ENCODE measurements at regions of chr5 and their contacts with region 1.

Region 1: GRCh38 chr5:42908509-42909488 is 97.1 kb upstream of the SELENOP start:
- DNase-seq: peak; percentile 87 to 89
- ATAC-seq: peak; percentile 91 to 97 (median 94)
- H3K4me3 ChIP-seq: peak overlapping the region; percentile 1 to 77 (median 56)
- H3K27ac ChIP-seq: peak overlapping the region in 1 of 10 donors; percentile 16
- H3K4me1 ChIP-seq: peaks cover 0 to 13% (median 4%) of the 10 kb centered on the region in 9 donors
- H3K27me3 ChIP-seq: peaks cover 0 to 20% (median 18%) of the 10 kb centered on the region in 7 donors
- CTCF ChIP-seq: peak; percentile 55 to 88 (median 84)

Region 2: GRCh38 chr5:42950440-42951292 is 41.9 kb after region 1 on chr5:
- intact Hi-C with region 1: loop called in 4 of 10 experiments (anchors 5 kb)
- DNase-seq: peak; percentile 29 to 81
- ATAC-seq: peak; percentile 82 to 92 (median 86)
- H3K4me3 ChIP-seq: peak overlapping the region; percentile 32 to 74 (median 60)
- H3K27ac ChIP-seq: peak overlapping the region; percentile 78 to 99 (median 94)
- H3K4me1 ChIP-seq: peaks cover 0 to 50% (median 25%) of the 10 kb centered on the region in 9 donors
- H3K27me3 ChIP-seq: peaks cover 12 to 99% (median 89%) of the 10 kb centered on the region in 7 donors
- CTCF ChIP-seq: no peak

Region 3: DNA sequence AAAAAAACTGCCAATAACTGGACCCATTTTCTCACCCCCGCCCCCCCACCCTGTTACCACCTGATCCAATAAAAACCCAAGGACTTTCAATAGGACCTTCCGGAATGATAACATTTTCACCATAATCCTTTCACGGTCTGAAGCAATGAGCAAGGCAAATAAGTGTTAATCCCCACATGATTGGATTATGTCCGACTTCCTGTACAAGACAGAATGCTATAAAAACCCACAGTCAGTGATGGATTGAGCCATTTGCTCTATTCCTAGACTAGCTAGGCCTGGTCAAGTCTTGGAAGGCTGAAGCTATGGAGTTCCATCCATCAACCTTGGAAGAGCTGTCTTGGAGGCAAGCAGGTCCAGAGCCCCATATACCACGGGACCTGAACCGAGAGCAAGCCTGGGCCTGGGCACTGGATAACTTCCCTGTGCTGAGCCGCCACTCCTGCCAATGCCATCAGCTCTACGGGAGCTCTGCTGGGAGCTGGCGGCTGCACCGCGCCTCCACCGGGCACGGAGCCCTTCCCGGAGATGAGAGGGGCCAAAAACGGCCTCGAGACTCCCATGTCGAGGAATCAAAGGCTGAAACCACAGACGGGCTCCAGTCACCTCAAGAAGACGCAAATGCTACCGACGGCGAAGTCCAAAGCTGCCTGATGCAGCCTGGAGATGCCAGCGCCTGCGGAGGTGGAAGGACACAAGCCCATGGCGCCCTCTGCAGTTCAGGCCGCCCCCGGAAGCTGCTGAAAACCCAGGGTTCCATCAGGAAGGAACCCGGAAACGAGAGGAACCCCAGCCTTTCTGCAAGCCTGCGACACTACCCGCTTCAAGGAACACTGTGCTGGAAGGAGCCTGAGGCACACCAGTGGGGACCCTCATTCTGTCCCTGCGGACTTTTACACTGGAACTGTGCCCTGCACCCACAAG is 62.1 kb after region 1 on chr5:
- intact Hi-C with region 1: loop called in 2 of 10 experiments (anchors 2 to 10 kb)
- DNase-seq: peak in 1 of 2 donors; percentile 29
- ATAC-seq: peak in 1 of 8 donors; percentile 29
- H3K4me3 ChIP-seq: no peak overlapping the region
- H3K27ac ChIP-seq: no peak overlapping the region
- H3K4me1 ChIP-seq: no peaks in the 10 kb centered on the region
- H3K27me3 ChIP-seq: peaks cover 0 to 29% (median 13%) of the 10 kb centered on the region in 7 donors
- CTCF ChIP-seq: peak in 6 of 9 donors; percentile 21 to 45 (median 28)

Region 4: GRCh38 chr5:42994246-42995151 is 85.7 kb after region 1 on chr5:
- intact Hi-C with region 1: loop called in 2 of 10 experiments (anchors 5 to 10 kb)
- DNase-seq: peak; percentile 80 to 93
- ATAC-seq: peak; percentile 62 to 84 (median 80)
- H3K4me3 ChIP-seq: peak overlapping the region; percentile 53 to 76 (median 64)
- H3K27ac ChIP-seq: peak overlapping the region; percentile 66 to 100 (median 96)
- H3K4me1 ChIP-seq: peaks cover 0 to 63% (median 16%) of the 10 kb centered on the region in 9 donors
- H3K27me3 ChIP-seq: peaks cover 0 to 100% (median 91%) of the 10 kb centered on the region in 7 donors
- CTCF ChIP-seq: peak; percentile 69 to 90 (median 86)

Region 5: DNA sequence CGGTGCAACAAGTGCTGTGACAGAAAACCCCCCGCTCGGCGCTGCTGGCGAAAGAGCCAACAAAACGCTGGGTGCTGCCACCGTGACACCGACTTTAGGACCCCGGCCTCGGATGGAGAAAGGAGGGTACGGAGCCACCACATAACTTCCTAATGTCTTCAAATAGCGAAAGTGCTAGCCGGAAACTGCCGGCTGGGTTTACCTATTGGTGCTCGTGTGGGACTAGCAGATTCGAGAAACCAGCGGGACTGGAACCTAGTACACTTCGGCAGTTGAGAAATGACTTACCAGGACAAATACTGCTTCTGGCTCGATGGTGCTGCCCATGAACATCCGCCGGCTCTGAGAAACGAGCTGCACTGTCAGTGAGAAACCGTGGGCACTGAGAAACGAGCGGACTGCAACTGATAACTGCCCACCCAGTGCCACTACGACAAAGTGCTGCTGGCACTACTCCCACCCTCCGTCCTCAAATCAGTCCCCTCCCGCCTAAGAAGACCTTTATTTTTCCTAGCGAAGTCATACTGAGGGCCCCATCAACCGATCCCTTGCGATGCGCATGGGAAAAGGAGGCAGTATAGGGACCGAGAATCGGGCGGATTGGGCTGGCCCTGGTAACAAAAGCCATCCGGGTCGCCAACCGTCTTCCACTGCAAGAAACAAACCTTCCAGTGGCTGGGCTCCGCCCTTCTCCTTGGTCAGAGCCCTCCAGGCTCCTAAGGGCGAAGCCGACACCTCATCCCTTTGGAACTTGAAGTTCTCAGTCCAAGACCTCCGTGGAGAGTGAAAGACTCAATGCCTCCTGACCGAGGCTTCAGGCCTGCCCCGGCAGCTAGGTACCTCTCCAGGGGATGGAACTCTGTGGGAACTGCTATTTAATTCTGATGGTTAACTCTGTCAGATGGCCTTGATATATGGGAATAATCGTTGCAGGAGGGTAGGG is 158.3 kb after region 1 on chr5:
- intact Hi-C with region 1: loop called in 2 of 10 experiments (anchors 10 kb)
- DNase-seq: peak; percentile 83 to 93
- ATAC-seq: peak; percentile 68 to 84 (median 72)
- H3K4me3 ChIP-seq: peak overlapping the region; percentile 70 to 93 (median 80)
- H3K27ac ChIP-seq: peak overlapping the region; percentile 98 to 100 (median 100)
- H3K4me1 ChIP-seq: peaks cover 6 to 49% (median 32%) of the 10 kb centered on the region in 9 donors
- H3K27me3 ChIP-seq: no peaks in the 10 kb centered on the region
- CTCF ChIP-seq: peak in 1 of 9 donors; percentile 16

Region 6: DNA sequence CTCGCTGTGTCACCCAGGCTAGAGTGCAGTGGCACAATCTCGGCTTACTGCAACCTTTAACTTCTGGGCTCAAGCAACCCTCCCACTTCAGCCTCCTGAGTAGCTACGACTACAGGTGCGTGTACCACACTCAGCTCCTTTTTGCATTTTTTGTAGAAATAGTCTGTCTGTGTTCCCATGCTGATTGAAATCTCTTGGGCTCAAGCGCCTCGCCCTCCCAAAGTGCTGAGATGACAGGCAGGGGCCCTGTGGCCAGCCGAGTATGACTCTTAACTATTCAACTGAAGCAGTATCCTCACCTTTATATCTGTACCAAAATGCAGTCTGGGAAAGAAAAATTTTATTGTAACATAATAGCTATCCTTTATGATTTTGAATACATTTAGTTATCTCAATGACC is 271.0 kb after region 1 on chr5:
- intact Hi-C with region 1: no loop called
- DNase-seq: no peak
- ATAC-seq: no peak
- H3K4me3 ChIP-seq: no peak overlapping the region
- H3K27ac ChIP-seq: no peak overlapping the region
- H3K4me1 ChIP-seq: no peaks in the 10 kb centered on the region
- H3K27me3 ChIP-seq: no peaks in the 10 kb centered on the region
- CTCF ChIP-seq: no peak

Region 7: GRCh38 chr5:43389679-43390329 is 481.0 kb after region 1 on chr5:
- intact Hi-C with region 1: loop called in 5 of 10 experiments (anchors 2 to 10 kb)
- DNase-seq: peak in 1 of 2 donors; percentile 50
- ATAC-seq: peak; percentile 72 to 93 (median 88)
- H3K4me3 ChIP-seq: no peak overlapping the region
- H3K27ac ChIP-seq: no peak overlapping the region
- H3K4me1 ChIP-seq: peaks cover 0 to 7% (median 0%) of the 10 kb centered on the region in 9 donors
- H3K27me3 ChIP-seq: peaks cover 0 to 9% (median 0%) of the 10 kb centered on the region in 7 donors
- CTCF ChIP-seq: peak; percentile 61 to 85 (median 80)

Measured in heart right ventricle (tissue), 16 donors.